ENCODE measurements at regions of chr17 and their contacts with region 1.

Region 1: GRCh38 chr17:42322382-42323267 is 34.3 kb downstream of the STAT5A start:
- DNase-seq: peak; percentile 96 to 97
- H3K4me3 ChIP-seq: no peak overlapping the region
- H3K27ac ChIP-seq: peak overlapping the region in 1 of 3 donors; percentile 12
- H3K4me1 ChIP-seq: no peaks in the 10 kb centered on the region
- H3K27me3 ChIP-seq: no peaks in the 10 kb centered on the region
- CTCF ChIP-seq: peak; percentile 96 to 100 (median 98)
- POLR2A ChIP-seq: no peak

Region 2: DNA sequence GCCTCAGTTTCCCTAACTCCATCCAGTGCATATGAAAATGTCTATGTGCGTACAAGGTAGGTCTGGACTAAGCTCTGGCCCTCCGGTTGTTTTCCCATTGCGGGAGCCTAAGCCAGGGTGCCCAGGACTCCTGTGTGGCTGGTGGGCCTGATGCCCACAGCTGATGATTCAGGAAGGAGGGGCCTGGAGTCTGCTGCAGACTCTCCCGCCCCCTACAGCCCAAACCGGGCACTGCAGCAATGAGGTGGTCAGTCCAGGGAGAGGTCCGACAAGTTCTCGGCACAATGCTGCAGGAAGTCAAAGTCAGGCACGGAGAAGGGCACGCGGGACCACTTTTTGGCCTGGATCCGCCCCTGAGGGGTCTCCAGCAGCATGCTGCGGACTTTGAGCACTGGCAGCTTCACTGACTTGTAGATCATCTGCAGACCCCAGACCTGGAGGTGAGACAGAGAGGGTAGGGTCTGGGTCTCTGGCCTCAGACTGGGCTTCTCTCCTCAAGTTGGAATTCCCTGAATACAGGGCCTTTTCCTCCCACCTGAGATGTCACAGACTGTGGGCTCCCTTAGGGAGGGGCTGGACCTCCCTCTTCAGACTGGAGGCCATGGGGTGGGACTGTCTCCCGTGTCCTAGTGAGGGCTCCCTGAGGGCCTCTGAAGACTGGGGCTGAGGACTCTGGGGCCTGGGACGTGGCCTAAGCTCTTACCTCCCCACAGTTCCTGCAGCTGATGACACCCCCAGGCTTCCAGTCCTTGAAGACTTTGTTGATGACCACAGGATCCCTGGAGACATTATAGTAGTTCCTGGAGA is 220.9 kb before region 1 on chr17:
- intact Hi-C with region 1: no loop called
- DNase-seq: peak in 1 of 2 donors; percentile 41
- H3K4me3 ChIP-seq: no peak overlapping the region
- H3K27ac ChIP-seq: no peak overlapping the region
- H3K4me1 ChIP-seq: peaks cover 6 to 8% of the 10 kb centered on the region in 2 donors
- H3K27me3 ChIP-seq: peaks cover 9% of the 10 kb centered on the region
- CTCF ChIP-seq: peak in 4 of 6 experiments; percentile 28 to 52 (median 30)
- POLR2A ChIP-seq: no peak

Region 3: DNA sequence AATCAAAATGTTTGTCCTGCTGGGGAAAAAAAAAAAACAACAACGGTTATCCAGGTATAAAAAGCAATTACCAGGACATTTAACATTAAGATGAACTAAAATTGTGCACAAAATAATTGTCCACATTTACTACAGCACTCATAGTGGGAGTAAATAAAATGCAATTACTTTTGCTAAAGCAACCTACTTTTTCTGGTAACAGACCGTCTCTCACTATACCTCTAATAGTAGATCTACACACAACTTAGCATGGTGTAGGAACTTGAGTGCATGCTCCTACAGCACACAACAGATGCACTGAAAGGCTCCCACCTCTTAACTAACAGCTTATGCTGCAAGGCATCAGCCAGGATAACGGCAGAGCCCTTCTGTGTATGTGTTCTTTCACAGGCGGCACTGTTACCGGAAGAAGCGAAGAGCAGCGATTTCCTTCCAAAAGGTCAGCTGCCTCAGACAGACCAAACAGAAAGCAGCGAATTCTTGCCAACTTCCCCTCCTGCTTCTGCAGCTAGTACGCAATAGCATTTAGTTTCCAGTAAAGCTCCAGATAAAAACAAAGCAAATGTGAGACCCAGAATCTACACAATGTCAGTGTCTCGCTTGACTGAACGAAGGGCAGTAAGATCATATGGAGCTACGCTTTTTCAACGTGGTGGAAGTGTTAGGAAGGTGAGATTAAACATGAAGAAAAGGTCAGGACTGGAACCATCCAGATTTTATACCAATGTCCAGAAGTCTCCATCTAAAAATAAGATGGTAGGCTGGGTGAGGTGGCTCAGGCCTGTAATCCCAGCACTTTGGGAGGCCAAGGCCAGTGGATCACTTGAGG is 74.1 kb before region 1 on chr17:
- intact Hi-C with region 1: no loop called
- DNase-seq: peak; percentile 78 to 83
- H3K4me3 ChIP-seq: peak overlapping the region in 1 of 3 donors; percentile 10
- H3K27ac ChIP-seq: peak overlapping the region; percentile 71 to 93 (median 88)
- H3K4me1 ChIP-seq: peaks cover 9 to 20% of the 10 kb centered on the region in 2 donors
- H3K27me3 ChIP-seq: no peaks in the 10 kb centered on the region
- CTCF ChIP-seq: no peak
- POLR2A ChIP-seq: peak in 1 of 2 donors; percentile 74

Region 4: GRCh38 chr17:42405963-42406495 is 83.4 kb after region 1 on chr17:
- intact Hi-C with region 1: loop called (anchors 2 kb)
- DNase-seq: peak; percentile 85 to 88
- H3K4me3 ChIP-seq: no peak overlapping the region
- H3K27ac ChIP-seq: peak overlapping the region in 2 of 3 donors; percentile 53 to 90
- H3K4me1 ChIP-seq: peaks cover 31 to 49% of the 10 kb centered on the region in 2 donors
- H3K27me3 ChIP-seq: no peaks in the 10 kb centered on the region
- CTCF ChIP-seq: peak; percentile 72 to 98 (median 90)
- POLR2A ChIP-seq: no peak

Region 5: GRCh38 chr17:42512626-42513250 is 190.1 kb after region 1 on chr17:
- intact Hi-C with region 1: no loop called
- DNase-seq: no peak
- H3K4me3 ChIP-seq: no peak overlapping the region
- H3K27ac ChIP-seq: peak overlapping the region; percentile 45 to 76 (median 56)
- H3K4me1 ChIP-seq: peaks cover 10 to 58% of the 10 kb centered on the region in 2 donors
- H3K27me3 ChIP-seq: no peaks in the 10 kb centered on the region
- CTCF ChIP-seq: no peak
- POLR2A ChIP-seq: no peak

Region 6: DNA sequence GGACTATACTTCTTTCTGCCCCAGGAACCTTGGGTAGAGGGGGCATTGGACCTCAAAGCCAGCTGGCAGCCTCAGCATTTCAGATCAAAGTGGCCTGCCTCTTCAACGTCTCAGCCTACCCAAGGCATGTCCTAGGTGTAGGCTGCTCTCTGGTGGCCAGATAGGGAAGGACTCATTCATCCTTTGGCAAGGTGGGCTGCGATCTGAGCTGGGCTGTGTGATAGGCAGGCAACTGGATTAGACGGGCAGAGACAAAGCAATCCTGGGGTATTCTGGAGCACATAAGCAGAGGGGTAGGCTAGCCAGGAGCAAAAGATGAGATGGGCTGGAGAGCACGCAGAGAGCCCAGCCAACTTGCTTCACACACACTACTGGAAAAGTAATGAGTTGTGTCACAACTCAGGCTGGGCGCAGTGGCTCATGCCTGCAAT is 204.7 kb after region 1 on chr17:
- intact Hi-C with region 1: loop called (anchors 5 kb)
- DNase-seq: peak; percentile 81 to 83
- H3K4me3 ChIP-seq: no peak overlapping the region
- H3K27ac ChIP-seq: peak overlapping the region in 2 of 3 donors; percentile 56 to 61
- H3K4me1 ChIP-seq: peaks cover 6 to 42% of the 10 kb centered on the region in 2 donors
- H3K27me3 ChIP-seq: no peaks in the 10 kb centered on the region
- CTCF ChIP-seq: peak; percentile 39 to 95 (median 86)
- POLR2A ChIP-seq: no peak